PC-9 (cell line): ENCODE measurements at regions of chr5 and their contacts with region 1.

Region 1: GRCh38 chr5:32346869-32347268 is 34.1 kb upstream of the MTMR12 start:
- DNase-seq: no peak
- H3K4me3 ChIP-seq: no peak overlapping the region
- H3K27ac ChIP-seq: no peak overlapping the region
- H3K4me1 ChIP-seq: no peaks in the 10 kb centered on the region
- H3K27me3 ChIP-seq: no peaks in the 10 kb centered on the region
- CTCF ChIP-seq: no peak

Region 2: GRCh38 chr5:32182463-32183081 is 164.3 kb before region 1 on chr5:
- CTCF ChIA-PET with region 1: no interaction called
- POLR2A ChIA-PET with region 1: no interaction called
- intact Hi-C with region 1: no loop called
- DNase-seq: no peak
- H3K4me3 ChIP-seq: no peak overlapping the region
- H3K27ac ChIP-seq: no peak overlapping the region
- H3K4me1 ChIP-seq: no peaks in the 10 kb centered on the region
- H3K27me3 ChIP-seq: no peaks in the 10 kb centered on the region
- CTCF ChIP-seq: no peak

Region 3: GRCh38 chr5:32239385-32239784 is 107.5 kb before region 1 on chr5:
- CTCF ChIA-PET with region 1: interaction called, 14 read pairs
- POLR2A ChIA-PET with region 1: no interaction called
- intact Hi-C with region 1: no loop called
- DNase-seq: no peak
- H3K4me3 ChIP-seq: no peak overlapping the region
- H3K27ac ChIP-seq: no peak overlapping the region
- H3K4me1 ChIP-seq: 0 out of 2 replicates have a peak, but pooled peaks cover under 1% of the 10 kb centered on the region
- H3K27me3 ChIP-seq: no peaks in the 10 kb centered on the region
- CTCF ChIP-seq: no peak

Region 4: GRCh38 chr5:32298059-32298415 is 48.8 kb before region 1 on chr5:
- CTCF ChIA-PET with region 1: no interaction called
- POLR2A ChIA-PET with region 1: no interaction called
- intact Hi-C with region 1: no loop called
- DNase-seq: peak in 1 of 2 experiments; percentile 26
- H3K4me3 ChIP-seq: no peak overlapping the region
- H3K27ac ChIP-seq: no peak overlapping the region
- H3K4me1 ChIP-seq: no peaks in the 10 kb centered on the region
- H3K27me3 ChIP-seq: no peaks in the 10 kb centered on the region
- CTCF ChIP-seq: no peak